ENCODE measurements at regions of chr4 and their contacts with region 1.

Region 1: DNA sequence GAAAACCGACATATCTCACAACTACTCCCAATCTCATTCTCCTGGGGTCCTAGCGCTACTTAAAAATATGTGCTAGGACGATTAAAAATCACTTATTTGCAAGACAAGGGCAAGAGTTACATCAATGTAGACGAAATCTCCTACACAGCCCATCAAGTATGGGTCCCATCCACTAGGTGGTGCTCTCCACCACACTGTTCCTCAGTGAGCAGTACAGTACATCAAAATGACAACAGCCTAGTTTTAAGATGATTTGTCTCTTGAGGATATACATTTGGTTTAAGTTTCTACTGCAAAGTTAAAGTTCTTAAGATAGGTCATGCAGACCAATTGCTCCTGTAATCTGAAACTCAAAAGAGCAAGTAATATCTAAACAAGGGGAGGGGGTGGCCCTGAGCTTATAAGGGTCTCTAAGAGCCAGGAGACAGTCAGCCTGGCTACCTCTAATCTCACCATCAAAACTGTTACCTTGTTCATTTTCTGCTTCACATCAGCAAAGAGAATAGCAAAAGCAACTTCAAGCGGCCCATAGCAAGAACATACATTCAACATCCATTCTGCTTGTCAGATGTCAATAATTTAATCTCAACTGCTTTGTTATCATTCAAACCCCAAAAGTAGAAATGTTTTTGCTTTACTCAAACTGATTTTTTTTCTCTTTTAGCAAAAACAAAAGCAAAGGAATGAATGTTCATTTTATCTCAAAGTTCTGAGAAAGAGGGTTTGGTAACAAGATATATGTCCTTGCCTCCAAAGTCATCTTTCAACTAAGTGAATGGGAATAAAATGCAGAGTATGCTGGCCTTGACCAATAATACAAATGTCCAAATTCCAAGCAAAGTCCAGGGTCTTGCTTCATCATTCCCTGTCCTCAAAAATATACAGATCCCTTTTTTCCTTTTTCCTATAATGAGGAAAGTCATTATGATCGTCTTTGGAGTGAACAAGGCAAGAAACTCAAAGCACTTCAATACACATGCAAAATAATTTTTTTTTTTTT is 53.1 kb downstream of the STX18 start:
- DNase-seq: peak; percentile 47 to 83 (median 58)
- ATAC-seq: peak; percentile 95
- H3K4me3 ChIP-seq: no peak overlapping the region
- H3K4me3 Mint-ChIP-seq: no peak overlapping the region
- H3K27ac ChIP-seq: no peak overlapping the region
- H3K27ac Mint-ChIP-seq: no peak overlapping the region
- H3K4me1 ChIP-seq: no peaks in the 10 kb centered on the region
- H3K4me1 Mint-ChIP-seq: peaks cover 5% of the 10 kb centered on the region
- H3K27me3 ChIP-seq: no peaks in the 10 kb centered on the region
- H3K27me3 Mint-ChIP-seq: no peaks in the 10 kb centered on the region
- CTCF ChIP-seq: peak; percentile 97

Region 2: DNA sequence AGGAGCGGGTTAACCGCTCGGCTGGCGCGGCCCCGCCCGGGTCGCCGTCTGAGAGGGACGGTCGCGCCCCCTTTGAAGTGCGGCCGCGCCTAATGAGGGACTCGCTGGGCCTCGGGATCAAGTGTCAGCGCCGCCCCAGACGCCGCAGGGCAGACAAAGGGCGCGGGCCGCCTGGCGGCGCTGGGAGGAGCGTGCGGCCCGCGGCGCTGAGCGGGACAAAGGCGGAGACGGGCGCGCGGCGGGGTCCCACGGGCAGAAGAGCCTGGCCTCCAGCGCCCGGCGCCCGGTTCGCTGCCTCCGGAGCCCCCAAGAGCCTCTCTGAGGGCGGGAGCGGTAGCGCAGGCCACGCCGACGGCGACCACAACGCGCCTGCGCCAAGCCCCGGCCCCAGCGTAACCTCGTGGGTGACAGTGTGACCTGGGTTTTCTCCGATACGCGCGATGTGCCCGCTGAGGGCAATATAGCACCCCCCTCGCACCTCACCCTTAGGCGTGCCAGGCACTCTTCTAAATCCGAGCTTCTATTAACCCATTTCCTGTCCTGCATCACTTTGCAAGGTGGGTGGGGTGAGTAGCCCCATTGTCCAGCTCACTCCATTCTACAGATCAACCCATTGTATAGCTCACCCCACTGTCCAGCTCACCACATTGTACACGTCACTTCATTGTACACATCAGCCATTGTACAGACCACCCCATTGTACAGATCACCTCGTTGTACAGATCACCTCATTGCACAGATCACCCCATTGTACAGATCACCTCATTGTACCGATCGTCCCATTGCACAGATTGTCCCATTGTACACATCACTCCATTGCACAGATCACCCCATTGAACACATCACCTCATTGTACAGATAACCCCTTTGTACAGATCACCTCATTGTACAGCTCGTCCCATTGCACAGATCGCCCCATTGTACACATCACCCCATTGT is 86.8 kb after region 1 on chr4:
- CTCF ChIA-PET with region 1: no interaction called
- POLR2A ChIA-PET with region 1: no interaction called
- intact Hi-C with region 1: loop called in 1 of 2 experiments (anchors 1 kb)
- DNase-seq: peak; percentile 28 to 84 (median 56)
- ATAC-seq: peak; percentile 83
- H3K4me3 ChIP-seq: peak overlapping the region; percentile 70
- H3K4me3 Mint-ChIP-seq: peak overlapping the region; percentile 87
- H3K27ac ChIP-seq: no peak overlapping the region
- H3K27ac Mint-ChIP-seq: peak overlapping the region; percentile 5
- H3K4me1 ChIP-seq: peaks cover 11% of the 10 kb centered on the region
- H3K4me1 Mint-ChIP-seq: peaks cover 10% of the 10 kb centered on the region
- H3K27me3 ChIP-seq: no peaks in the 10 kb centered on the region
- H3K27me3 Mint-ChIP-seq: no peaks in the 10 kb centered on the region
- CTCF ChIP-seq: peak; percentile 41

Region 3: DNA sequence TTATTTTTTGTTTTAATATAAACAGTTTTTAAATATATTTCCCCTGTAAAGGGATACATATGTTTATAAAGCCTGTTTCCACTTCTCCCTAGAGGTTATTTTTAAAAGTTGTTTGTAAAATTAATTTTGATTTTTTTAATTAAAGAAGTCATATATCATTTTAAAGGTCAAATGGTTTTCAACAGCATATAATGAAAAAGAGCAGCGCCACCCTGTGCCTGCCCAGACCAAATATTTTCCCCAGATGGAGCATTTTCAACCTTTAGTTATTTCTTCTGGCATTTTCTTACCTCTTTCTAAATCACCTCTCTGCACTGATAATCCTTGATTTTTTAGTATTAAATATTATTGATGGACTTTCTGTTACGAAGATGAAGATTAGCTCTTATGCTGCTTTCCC is 391.8 kb after region 1 on chr4:
- CTCF ChIA-PET with region 1: no interaction called
- POLR2A ChIA-PET with region 1: no interaction called
- intact Hi-C with region 1: loop called in 1 of 2 experiments (anchors 2 kb)
- DNase-seq: no peak
- ATAC-seq: no peak
- H3K4me3 ChIP-seq: no peak overlapping the region
- H3K4me3 Mint-ChIP-seq: no peak overlapping the region
- H3K27ac ChIP-seq: no peak overlapping the region
- H3K27ac Mint-ChIP-seq: no peak overlapping the region
- H3K4me1 ChIP-seq: no peaks in the 10 kb centered on the region
- H3K4me1 Mint-ChIP-seq: no peaks in the 10 kb centered on the region
- H3K27me3 ChIP-seq: peaks cover 8 to 22% of the 10 kb centered on the region in 2 experiments
- H3K27me3 Mint-ChIP-seq: peaks cover 52% of the 10 kb centered on the region
- CTCF ChIP-seq: peak; percentile 20

Region 4: DNA sequence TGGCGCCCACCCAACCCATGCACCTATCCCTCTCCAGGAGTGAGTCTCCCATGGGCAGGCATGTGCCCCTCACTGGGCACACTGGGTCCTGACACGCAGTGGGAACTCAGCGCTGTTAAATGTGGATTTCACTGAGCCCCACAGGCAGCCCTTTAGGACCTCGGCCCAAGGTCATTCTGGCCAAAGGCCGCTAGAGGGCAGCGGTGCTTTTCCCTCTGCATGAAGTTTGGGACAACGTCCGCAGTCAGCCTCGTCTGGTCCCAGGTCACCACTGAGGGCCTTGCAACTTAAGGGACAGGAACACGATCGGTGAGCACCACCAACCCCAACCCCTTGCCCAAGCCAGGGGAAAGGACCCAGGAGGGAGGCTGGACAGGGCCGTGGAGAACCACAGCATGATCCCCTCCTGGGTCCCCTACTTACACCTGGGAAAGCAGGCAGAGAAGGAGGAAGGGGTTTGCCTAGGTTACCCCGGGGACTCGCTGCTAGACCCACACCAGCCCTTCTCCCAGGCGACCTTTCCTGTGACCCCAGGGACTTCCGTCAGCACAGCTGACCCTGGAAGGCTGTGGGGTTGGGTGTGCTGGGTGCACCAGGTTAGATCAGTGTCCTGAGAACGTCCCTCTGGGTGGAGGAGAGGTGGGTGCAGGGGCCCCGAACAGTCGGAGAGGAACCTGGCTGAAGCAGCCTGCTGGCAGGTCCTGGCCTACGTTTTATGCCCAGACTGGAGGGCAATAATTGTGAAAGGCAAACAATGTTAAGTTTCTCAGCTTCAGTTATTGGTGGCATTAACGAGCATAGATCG is 506.6 kb after region 1 on chr4:
- CTCF ChIA-PET with region 1: no interaction called
- POLR2A ChIA-PET with region 1: no interaction called
- intact Hi-C with region 1: loop called (anchors 2 to 5 kb)
- DNase-seq: peak in 10 of 14 experiments; percentile 5 to 55 (median 15)
- ATAC-seq: no peak
- H3K4me3 ChIP-seq: no peak overlapping the region
- H3K4me3 Mint-ChIP-seq: no peak overlapping the region
- H3K27ac ChIP-seq: no peak overlapping the region
- H3K27ac Mint-ChIP-seq: no peak overlapping the region
- H3K4me1 ChIP-seq: no peaks in the 10 kb centered on the region
- H3K4me1 Mint-ChIP-seq: no peaks in the 10 kb centered on the region
- H3K27me3 ChIP-seq: peaks cover 3 to 7% of the 10 kb centered on the region in 2 experiments
- H3K27me3 Mint-ChIP-seq: peaks cover 20% of the 10 kb centered on the region
- CTCF ChIP-seq: peak; percentile 69

Region 5: DNA sequence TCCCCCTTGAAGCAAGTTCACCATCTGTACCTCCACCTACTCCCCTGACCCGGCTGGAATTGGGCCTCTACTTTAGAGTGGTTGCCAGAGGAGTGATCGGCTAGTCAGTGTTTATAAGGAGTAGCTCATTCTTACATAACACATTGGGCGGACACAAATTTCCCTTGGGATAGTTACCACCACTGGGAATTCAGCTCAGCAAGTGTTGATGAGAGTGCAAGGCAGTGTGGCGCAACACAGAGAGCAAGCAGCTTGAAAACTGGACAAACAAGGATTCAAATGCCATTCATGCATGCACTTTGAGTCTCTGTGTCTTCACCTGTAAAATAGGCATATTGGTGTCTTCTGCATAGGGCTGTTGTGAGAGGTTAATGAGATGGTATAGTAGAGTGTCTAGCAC is 655.2 kb after region 1 on chr4:
- CTCF ChIA-PET with region 1: no interaction called
- POLR2A ChIA-PET with region 1: no interaction called
- intact Hi-C with region 1: loop called in 1 of 2 experiments (anchors 2 kb)
- DNase-seq: no peak
- ATAC-seq: no peak
- H3K4me3 ChIP-seq: no peak overlapping the region
- H3K4me3 Mint-ChIP-seq: no peak overlapping the region
- H3K27ac ChIP-seq: no peak overlapping the region
- H3K27ac Mint-ChIP-seq: no peak overlapping the region
- H3K4me1 ChIP-seq: no peaks in the 10 kb centered on the region
- H3K4me1 Mint-ChIP-seq: no peaks in the 10 kb centered on the region
- H3K27me3 ChIP-seq: no peaks in the 10 kb centered on the region
- H3K27me3 Mint-ChIP-seq: no peaks in the 10 kb centered on the region
- CTCF ChIP-seq: no peak

Region 6: GRCh38 chr4:5635826-5636195 is 1147.1 kb after region 1 on chr4:
- CTCF ChIA-PET with region 1: no interaction called
- POLR2A ChIA-PET with region 1: no interaction called
- intact Hi-C with region 1: no loop called
- DNase-seq: no peak
- ATAC-seq: no peak
- H3K4me3 ChIP-seq: no peak overlapping the region
- H3K4me3 Mint-ChIP-seq: no peak overlapping the region
- H3K27ac ChIP-seq: no peak overlapping the region
- H3K27ac Mint-ChIP-seq: no peak overlapping the region
- H3K4me1 ChIP-seq: no peaks in the 10 kb centered on the region
- H3K4me1 Mint-ChIP-seq: no peaks in the 10 kb centered on the region
- H3K27me3 ChIP-seq: no peaks in the 10 kb centered on the region
- H3K27me3 Mint-ChIP-seq: no peaks in the 10 kb centered on the region
- CTCF ChIP-seq: no peak

Region 7: DNA sequence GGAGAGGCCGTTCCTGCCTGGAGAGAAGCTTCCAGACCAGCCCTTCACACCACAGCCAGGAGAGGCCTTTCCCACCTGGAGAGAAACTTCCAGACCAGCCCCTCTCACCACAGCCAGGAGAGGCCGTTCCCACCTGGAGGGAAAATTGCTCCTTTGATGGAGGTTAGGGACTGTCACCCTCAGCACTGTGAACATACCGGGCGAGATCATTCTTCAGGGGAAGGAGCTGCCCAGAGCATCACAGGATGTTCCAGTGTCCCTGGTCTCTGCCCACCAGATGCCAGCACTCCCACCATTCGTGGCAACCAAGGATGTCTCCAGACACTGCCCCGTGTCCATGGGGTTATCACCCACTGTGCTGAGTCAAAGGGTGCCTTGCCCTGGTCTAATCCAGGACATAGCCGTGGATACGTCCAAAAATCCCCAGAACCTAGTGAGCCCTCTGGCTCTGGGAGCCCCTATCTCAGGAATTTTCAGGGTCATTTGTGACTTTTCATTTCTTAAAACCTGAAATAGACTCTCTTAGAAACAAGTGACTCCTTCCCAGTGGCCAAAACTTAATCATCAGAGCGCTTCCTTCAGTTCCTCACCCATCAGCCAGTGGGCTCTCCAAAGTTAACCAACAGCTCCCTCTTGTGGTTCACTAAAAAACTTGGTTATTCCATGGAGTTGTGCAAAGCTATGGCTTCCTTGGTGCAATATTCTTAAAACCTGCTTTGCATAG is 1324.0 kb after region 1 on chr4:
- CTCF ChIA-PET with region 1: interaction called, 3 read pairs
- POLR2A ChIA-PET with region 1: no interaction called
- intact Hi-C with region 1: loop called (anchors 1 to 5 kb)
- DNase-seq: peak in 4 of 14 experiments; percentile 13 to 56 (median 48)
- ATAC-seq: no peak
- H3K4me3 ChIP-seq: no peak overlapping the region
- H3K4me3 Mint-ChIP-seq: no peak overlapping the region
- H3K27ac ChIP-seq: no peak overlapping the region
- H3K27ac Mint-ChIP-seq: no peak overlapping the region
- H3K4me1 ChIP-seq: no peaks in the 10 kb centered on the region
- H3K4me1 Mint-ChIP-seq: no peaks in the 10 kb centered on the region
- H3K27me3 ChIP-seq: no peaks in the 10 kb centered on the region
- H3K27me3 Mint-ChIP-seq: peaks cover 9% of the 10 kb centered on the region
- CTCF ChIP-seq: peak; percentile 29

Region 8: DNA sequence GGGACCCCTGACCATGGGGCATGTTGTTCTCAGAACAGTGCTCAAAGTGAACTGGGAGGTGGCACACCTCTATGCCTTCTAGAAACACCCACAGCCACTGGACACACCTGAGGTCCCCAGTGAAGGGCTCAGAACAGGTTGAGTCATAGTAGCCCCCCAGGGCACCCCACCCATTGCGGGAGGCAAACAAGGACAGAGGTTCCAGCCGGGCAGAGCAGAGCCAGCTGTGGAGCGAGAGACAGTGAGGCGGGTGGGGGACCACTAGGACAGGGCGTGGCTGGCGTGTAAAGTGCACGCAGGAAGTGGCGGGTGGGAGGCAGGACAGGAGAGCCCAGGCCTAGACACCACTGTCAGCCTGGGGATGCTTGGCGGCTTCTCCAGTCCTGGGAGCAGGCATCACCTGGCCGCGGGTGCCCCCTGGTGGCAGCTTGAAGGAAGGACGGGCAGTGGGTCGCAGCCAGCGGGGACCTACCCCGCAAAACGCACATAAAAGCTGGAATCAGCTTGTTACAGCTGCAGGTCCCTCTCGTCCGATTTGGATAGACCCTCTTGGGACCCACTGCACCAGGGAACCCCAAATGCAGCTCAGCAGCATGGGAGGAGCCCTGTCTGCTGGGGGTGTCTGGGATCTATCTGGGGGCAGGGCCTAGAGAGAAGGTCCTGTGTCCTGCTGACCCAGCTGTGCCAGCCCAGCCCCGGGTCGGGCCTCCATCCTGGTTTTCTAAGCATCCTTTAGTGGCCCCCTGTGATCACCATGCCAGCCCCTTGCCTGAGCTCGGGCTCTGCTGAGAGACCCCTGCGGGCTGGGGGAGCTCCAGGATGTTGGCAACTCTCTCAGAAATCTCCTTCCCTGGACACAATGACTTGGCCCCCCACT is 1838.6 kb after region 1 on chr4:
- CTCF ChIA-PET with region 1: no interaction called
- POLR2A ChIA-PET with region 1: no interaction called
- intact Hi-C with region 1: loop called in 1 of 2 experiments (anchors 5 kb)
- DNase-seq: peak; percentile 45 to 86 (median 74)
- ATAC-seq: peak; percentile 77
- H3K4me3 ChIP-seq: no peak overlapping the region
- H3K4me3 Mint-ChIP-seq: no peak overlapping the region
- H3K27ac ChIP-seq: no peak overlapping the region
- H3K27ac Mint-ChIP-seq: no peak overlapping the region
- H3K4me1 ChIP-seq: peaks cover 7% of the 10 kb centered on the region
- H3K4me1 Mint-ChIP-seq: no peaks in the 10 kb centered on the region
- H3K27me3 ChIP-seq: peaks cover 12 to 24% of the 10 kb centered on the region in 2 experiments
- H3K27me3 Mint-ChIP-seq: peaks cover 60% of the 10 kb centered on the region
- CTCF ChIP-seq: peak; percentile 89